ENCODE measurements at regions of chr2 and their contacts with region 1.

Region 1: DNA sequence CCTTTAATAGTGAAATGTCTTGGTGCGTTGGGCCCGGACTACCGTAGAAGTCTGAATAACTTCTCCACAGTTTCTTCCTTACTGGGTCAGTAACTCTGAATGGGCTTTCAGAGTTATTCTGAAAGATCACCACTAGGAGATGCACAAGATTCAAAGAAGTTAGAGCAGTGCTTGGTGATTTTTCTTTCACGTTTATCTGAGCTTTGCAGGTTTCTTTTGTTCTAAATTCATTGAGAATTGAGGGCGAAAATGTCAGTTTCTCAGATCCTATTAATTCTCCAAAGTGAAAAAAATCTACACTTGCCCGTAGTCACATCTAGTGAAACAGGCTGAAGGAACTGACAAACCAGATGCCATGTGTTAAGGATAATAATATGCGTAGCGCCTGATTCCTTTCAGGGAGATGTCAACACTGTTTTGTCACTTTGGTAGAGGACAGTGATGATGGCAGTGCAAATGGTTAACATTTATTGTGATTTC is 70.1 kb downstream of the QPCT start:
- DNase-seq: no peak
- H3K4me3 ChIP-seq: no peak overlapping the region
- CTCF ChIP-seq: peak; percentile 75

Region 2: GRCh38 chr2:37585982-37586621 is 171.6 kb after region 1 on chr2:
- CTCF ChIA-PET with region 1: interaction called, 12 read pairs
- POLR2A ChIA-PET with region 1: no interaction called
- DNase-seq: peak; percentile 85
- H3K4me3 ChIP-seq: no peak overlapping the region
- CTCF ChIP-seq: no peak

Region 3: DNA sequence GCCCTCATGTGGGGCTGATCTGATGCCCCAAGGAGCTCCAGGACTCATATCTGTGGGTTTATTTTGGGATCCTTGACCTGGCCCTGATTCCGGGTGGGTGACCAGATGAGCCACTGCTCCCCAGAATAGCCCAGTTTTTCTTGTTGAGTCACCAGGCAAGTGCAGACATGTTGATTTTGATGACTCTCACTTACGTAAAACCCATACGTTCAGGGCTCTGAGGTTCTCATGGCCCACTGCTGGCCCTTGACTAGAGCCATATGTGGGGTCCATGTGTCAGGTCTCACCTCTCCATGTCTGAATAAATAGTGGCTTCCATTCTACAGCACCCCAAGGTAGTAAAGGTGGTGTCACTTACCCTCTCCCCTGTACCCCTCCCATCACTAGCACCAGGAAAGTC is 215.0 kb after region 1 on chr2:
- CTCF ChIA-PET with region 1: interaction called, 32 read pairs
- POLR2A ChIA-PET with region 1: interaction called, 4 read pairs
- DNase-seq: no peak
- H3K4me3 ChIP-seq: no peak overlapping the region
- CTCF ChIP-seq: no peak

Region 4: GRCh38 chr2:37653805-37654378 is 239.4 kb after region 1 on chr2:
- CTCF ChIA-PET with region 1: interaction called, 20 read pairs
- POLR2A ChIA-PET with region 1: interaction called, 3 read pairs
- DNase-seq: no peak
- H3K4me3 ChIP-seq: no peak overlapping the region
- CTCF ChIP-seq: no peak

Region 5: GRCh38 chr2:37832590-37833197 is 418.2 kb after region 1 on chr2:
- CTCF ChIA-PET with region 1: interaction called, 158 read pairs
- POLR2A ChIA-PET with region 1: interaction called, 5 read pairs
- DNase-seq: no peak
- H3K4me3 ChIP-seq: no peak overlapping the region
- CTCF ChIP-seq: peak; percentile 73

Region 6: DNA sequence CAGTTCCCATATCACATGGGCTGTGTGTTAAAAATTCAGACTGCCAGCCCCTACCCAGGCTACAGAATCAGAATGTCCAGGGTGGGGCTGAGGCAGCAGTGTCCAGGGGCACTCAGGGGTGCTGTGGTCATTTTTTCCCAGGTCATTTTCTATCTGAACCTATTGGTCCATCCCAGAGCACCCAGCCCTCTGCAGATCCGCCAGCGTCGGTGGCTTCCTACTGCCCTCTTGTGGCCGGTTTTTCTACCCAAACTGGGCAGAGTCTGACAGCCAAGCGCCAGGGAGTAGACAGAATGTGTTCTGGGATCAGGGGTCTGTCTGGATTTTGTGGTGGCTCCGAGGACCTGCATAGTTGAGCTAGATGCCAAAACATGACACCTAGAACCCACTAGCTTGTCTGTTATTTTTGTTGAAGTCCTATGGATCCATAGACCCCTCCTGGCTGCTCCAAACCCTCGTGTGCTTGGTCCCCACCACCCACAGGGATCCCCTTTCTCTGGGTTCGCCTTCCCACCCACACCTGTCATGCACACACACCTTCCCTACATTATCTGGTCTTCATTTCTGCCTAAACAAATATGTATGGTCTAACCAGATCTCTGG is 476.5 kb after region 1 on chr2:
- CTCF ChIA-PET with region 1: interaction called, 55 read pairs
- POLR2A ChIA-PET with region 1: no interaction called
- DNase-seq: no peak
- H3K4me3 ChIP-seq: no peak overlapping the region
- CTCF ChIP-seq: peak; percentile 84